Activated naive CD4-positive, alpha-beta T cell treated with anti-CD3 and anti-CD28 coated beads for 36 hours (primary cell): ENCODE measurements at regions of chr10 and their contacts with region 1.

Region 1: DNA sequence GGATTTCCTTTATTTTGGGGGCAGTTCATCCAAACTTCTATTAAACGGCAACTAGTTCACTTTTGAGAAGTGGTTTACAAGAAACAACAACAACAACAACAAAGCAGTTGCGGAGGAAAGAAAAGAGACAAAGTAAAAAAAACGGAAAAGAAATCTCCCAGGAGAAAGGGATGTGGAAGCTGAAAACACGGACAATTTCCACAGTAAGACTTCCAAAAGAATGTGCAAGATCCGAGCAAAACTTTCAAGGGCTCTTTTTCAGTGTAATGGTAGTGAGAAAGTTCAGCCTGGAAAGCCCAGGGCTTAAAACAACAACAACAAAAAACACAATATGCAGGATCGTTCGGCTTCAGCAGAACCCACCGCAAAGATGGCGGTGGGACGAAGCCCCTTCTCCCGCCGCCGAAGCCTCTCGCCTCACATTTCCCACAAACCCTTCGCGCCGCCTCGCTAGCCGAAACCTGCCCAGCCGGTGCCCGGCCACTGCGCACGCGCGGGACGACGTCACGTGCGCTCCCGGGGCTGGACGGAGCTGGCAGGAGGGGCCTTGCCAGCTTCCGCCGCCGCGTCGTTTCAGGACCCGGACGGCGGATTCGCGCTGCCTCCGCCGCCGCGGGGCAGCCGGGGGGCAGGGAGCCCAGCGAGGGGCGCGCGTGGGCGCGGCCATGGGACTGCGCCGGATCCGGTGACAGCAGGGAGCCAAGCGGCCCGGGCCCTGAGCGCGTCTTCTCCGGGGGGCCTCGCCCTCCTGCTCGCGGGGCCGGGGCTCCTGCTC is at the start of gene TNKS2:
- DNase-seq: peak; percentile 94
- H3K4me3 Mint-ChIP-seq: peak within 1 kb of the TSS; percentile 98
- H3K27ac Mint-ChIP-seq: peak within 1 kb of the TSS; percentile 99
- H3K4me1 Mint-ChIP-seq: peaks cover 47% of the 10 kb centered on the region
- H3K27me3 Mint-ChIP-seq: no peaks in the 10 kb centered on the region
- total RNA-seq, gene TNKS2: 39.3 to 40.0 TPM

Region 2: DNA sequence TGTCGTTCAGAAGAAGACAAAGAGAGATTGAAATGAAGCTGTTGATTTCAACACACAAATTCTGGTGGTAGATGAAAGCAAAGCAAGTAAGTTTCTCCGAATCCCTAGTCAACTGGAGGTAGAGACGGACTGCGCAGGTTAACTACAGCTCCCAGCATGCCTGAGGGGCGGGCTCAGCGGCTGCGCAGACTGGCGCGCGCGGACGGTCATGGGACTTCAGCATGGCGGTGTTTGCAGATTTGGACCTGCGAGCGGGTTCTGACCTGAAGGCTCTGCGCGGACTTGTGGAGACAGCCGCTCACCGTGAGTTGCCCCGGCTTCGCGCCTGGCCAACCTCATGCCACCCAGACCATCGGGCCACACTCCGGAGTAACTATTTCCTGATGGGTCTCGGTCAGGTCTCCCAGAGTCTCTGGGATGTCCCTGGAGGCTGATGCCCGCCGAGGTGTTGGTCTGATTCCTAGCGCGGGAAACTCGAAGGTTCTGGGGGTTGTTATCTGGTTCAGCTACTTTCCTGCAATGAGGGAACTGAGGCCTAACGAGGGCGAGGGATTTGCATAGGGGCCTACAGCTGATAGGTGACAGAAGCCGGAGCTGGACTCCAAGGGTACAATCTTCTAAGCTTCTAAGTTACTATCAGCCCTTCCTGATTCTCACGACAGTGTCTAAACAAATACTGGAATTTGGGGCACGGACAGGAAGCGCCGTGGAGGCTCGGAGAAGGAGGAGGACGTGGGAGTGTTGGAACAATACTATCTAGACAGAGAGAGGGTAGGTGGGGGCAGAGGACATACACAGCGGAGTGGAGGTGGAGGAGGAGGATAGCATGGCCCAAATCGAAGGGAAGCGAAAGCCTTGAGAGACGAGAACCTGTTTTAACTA is 926.1 kb before region 1 on chr10 and contains the start of gene RPP30:
- CTCF ChIA-PET with region 1: no interaction called
- intact Hi-C with region 1: loop called (anchors 2 kb)
- DNase-seq: peak; percentile 89
- H3K4me3 Mint-ChIP-seq: peak within 1 kb of the TSS; percentile 96
- H3K27ac Mint-ChIP-seq: peak within 1 kb of the TSS; percentile 90
- H3K4me1 Mint-ChIP-seq: peaks cover 24% of the 10 kb centered on the region
- H3K27me3 Mint-ChIP-seq: peaks cover 14% of the 10 kb centered on the region
- total RNA-seq, gene RPP30: 74.7 to 75.8 TPM

Region 3: DNA sequence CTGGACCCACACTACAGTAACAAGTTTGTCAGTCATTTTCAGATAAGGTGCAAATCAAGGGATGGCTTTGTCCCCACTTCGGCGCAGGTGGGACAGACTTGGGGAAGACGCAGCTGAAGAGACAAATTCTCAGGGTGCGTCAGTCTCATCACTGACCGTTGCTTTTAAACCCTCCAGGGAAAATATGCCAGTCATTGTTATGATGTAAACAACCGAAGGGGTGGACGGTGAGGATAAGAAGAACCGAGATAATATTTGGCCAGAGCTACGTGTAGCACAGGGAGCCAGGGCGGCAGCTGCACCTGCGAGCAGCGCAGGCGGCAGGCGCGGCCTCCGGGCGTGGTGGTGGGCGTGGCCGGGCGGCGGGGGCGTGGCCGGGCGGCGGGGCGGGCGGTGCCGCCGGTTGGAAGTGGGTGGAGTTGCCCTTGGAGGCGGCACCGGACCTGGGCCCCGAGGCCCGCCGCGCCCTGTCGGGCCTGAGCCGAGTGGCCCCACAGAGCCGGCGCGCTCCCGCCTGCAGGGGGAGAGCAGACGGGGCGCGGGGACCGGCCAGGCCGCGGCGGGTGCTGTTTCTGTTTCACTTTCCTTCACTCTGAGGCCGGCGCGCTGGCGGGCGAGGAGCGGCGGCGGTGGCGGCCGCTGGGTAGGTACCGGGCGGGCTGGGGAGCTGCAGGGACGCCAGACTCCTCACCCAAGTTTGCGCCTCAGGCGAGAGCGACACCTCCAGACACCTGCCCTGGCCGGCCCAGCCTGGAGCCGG is 577.7 kb before region 1 on chr10 and contains the start of gene PCGF5:
- CTCF ChIA-PET with region 1: no interaction called
- intact Hi-C with region 1: loop called (anchors 2 kb)
- DNase-seq: peak; percentile 89
- H3K4me3 Mint-ChIP-seq: peak within 1 kb of the TSS; percentile 80
- H3K27ac Mint-ChIP-seq: peak within 1 kb of the TSS; percentile 22
- H3K4me1 Mint-ChIP-seq: peaks cover 33% of the 10 kb centered on the region
- H3K27me3 Mint-ChIP-seq: no peaks in the 10 kb centered on the region
- total RNA-seq, gene PCGF5: 34.2 to 36.4 TPM

Region 4: GRCh38 chr10:91758303-91759146 is 39.5 kb before region 1 on chr10:
- CTCF ChIA-PET with region 1: interaction called, 7 read pairs
- intact Hi-C with region 1: loop called (anchors 1 kb)
- DNase-seq: no peak
- H3K4me3 Mint-ChIP-seq: no peak overlapping the region
- H3K27ac Mint-ChIP-seq: no peak overlapping the region
- H3K4me1 Mint-ChIP-seq: peaks cover 6% of the 10 kb centered on the region
- H3K27me3 Mint-ChIP-seq: peaks cover 16% of the 10 kb centered on the region

Region 5: GRCh38 chr10:91829268-91829667 is 31.2 kb after region 1 on chr10:
- CTCF ChIA-PET with region 1: no interaction called
- intact Hi-C with region 1: no loop called
- DNase-seq: no peak
- H3K4me3 Mint-ChIP-seq: no peak overlapping the region
- H3K27ac Mint-ChIP-seq: peak overlapping the region; percentile 5
- H3K4me1 Mint-ChIP-seq: peaks cover 4% of the 10 kb centered on the region
- H3K27me3 Mint-ChIP-seq: no peaks in the 10 kb centered on the region

Region 6: GRCh38 chr10:91923371-91924211 is 125.5 kb after region 1 on chr10 and contains the start of gene BTAF1:
- CTCF ChIA-PET with region 1: interaction called, 3 read pairs
- intact Hi-C with region 1: loop called (anchors 1 kb)
- DNase-seq: peak; percentile 93
- H3K4me3 Mint-ChIP-seq: peak within 1 kb of the TSS; percentile 86
- H3K27ac Mint-ChIP-seq: peak within 1 kb of the TSS; percentile 99
- H3K4me1 Mint-ChIP-seq: peaks cover 35% of the 10 kb centered on the region
- H3K27me3 Mint-ChIP-seq: no peaks in the 10 kb centered on the region
- total RNA-seq, gene BTAF1: 42.6 to 43.6 TPM

Region 7: DNA sequence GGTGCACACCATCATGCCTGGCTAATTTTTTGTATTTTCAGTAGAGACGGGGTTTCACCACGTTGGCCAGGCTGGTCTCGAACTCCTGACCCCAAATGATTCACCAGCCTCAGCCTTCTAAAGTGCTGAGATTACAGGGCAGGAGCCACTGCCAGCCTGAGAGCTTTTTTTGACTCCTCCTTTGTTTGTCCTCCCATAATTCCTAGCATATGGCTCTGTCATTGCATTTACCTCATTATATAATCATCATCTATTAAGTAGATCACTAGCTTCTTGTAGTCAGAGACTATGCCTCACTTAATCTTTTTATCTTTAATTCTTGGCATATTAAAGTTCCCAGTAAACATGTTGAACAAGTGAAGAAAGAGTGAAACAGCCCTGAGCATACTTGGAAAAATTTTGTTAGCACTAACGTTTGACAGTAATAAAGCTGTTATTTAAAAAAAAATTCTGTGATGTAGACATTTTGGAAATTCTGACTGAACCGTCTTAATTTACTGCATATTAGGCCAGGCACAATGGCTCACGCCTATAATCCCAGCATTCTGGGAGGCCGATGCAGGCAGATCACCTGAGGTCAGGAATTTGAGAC is 410.8 kb after region 1 on chr10:
- CTCF ChIA-PET with region 1: no interaction called
- intact Hi-C with region 1: loop called (anchors 5 kb)
- DNase-seq: no peak
- H3K4me3 Mint-ChIP-seq: no peak overlapping the region
- H3K27ac Mint-ChIP-seq: no peak overlapping the region
- H3K4me1 Mint-ChIP-seq: peaks cover 4% of the 10 kb centered on the region
- H3K27me3 Mint-ChIP-seq: no peaks in the 10 kb centered on the region

Region 8: DNA sequence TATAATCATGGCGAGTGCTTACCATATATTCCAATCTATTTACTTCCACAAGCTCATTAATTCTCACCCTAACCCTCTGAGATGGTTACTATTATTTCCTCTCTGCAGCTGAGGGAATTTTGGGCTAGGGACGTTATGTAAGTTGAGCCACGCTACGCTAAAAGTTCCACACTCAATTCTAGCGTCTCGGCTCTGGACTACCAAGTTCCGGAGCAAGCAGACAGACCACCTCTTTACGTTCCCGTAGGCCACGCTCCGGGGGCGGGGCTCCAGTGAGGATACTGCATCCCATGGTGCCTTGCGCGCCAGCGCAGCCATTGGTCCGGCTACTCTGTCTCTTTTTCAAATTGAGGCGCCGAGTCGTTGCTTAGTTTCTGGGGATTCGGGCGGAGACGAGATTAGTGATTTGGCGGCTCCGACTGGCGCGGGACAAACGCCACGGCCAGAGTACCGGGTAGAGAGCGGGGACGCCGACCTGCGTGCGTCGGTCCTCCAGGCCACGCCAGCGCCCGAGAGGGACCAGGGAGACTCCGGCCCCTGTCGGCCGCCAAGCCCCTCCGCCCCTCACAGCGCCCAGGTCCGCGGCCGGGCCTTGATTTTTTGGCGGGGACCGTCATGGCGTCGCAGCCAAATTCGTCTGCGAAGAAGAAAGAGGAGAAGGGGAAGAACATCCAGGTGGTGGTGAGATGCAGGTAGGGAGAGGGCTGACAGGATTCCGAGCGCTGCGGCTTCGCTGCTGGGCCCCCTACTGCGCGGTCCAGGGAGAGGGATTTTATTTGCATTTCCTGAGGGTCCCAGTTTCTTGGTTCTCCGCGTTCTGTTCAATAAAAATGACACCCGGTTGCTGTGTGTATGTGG is 794.9 kb after region 1 on chr10 and contains the start of gene KIF11:
- CTCF ChIA-PET with region 1: no interaction called
- intact Hi-C with region 1: loop called (anchors 2 kb)
- DNase-seq: peak; percentile 99
- H3K4me3 Mint-ChIP-seq: peak within 1 kb of the TSS; percentile 95
- H3K27ac Mint-ChIP-seq: peak within 1 kb of the TSS; percentile 99
- H3K4me1 Mint-ChIP-seq: peaks cover 23% of the 10 kb centered on the region
- H3K27me3 Mint-ChIP-seq: no peaks in the 10 kb centered on the region
- total RNA-seq, gene KIF11: 43.2 to 43.4 TPM